ENCODE measurements at regions of chr14 and their contacts with region 1.

Region 1: GRCh38 chr14:66009089-66009488 is 477.1 kb upstream of the CCDC196 start:
- DNase-seq: peak; percentile 55
- ATAC-seq: peak; percentile 73; the same call in 1 of the 2 replicates
- H3K4me3 ChIP-seq: no peak overlapping the region
- H3K27ac ChIP-seq: no peak overlapping the region
- H3K4me1 ChIP-seq: no peaks in the 10 kb centered on the region
- H3K27me3 ChIP-seq: no peaks in the 10 kb centered on the region
- CTCF ChIP-seq: no peak

Region 2: GRCh38 chr14:65287264-65288131 is 721.6 kb before region 1 on chr14:
- CTCF ChIA-PET with region 1: no interaction called
- POLR2A ChIA-PET with region 1: no interaction called
- intact Hi-C with region 1: no loop called
- DNase-seq: no peak
- ATAC-seq: no peak
- H3K4me3 ChIP-seq: no peak overlapping the region
- H3K27ac ChIP-seq: no peak overlapping the region
- H3K4me1 ChIP-seq: peaks cover 28% of the 10 kb centered on the region
- H3K27me3 ChIP-seq: no peaks in the 10 kb centered on the region
- CTCF ChIP-seq: no peak

Region 3: DNA sequence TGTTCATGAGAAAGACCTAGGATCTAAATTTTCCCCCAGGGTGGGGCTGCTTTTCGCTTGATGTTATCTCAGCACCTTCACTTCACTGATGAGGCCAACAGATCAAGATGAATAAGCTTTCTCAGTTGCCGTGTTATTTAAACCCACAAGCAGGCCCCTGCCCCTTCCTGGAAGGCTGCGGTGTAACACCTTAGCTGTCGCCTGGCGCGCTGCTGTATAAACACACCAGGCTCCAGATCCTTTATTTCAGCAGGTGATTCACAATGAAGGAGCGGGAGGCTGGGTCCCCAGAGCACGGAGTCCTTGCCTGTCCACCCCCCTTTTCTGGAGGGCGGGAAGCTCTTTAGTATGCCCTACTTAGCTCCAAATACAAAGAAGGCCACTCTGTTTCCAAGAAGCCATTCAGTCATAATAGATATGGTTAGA is 81.1 kb before region 1 on chr14:
- CTCF ChIA-PET with region 1: no interaction called
- POLR2A ChIA-PET with region 1: no interaction called
- intact Hi-C with region 1: no loop called
- DNase-seq: no peak
- ATAC-seq: no peak
- H3K4me3 ChIP-seq: no peak overlapping the region
- H3K27ac ChIP-seq: no peak overlapping the region
- H3K4me1 ChIP-seq: no peaks in the 10 kb centered on the region
- H3K27me3 ChIP-seq: peaks cover 81% of the 10 kb centered on the region
- CTCF ChIP-seq: no peak

Region 4: GRCh38 chr14:65972891-65973290 is 36.2 kb before region 1 on chr14:
- CTCF ChIA-PET with region 1: no interaction called
- POLR2A ChIA-PET with region 1: no interaction called
- intact Hi-C with region 1: no loop called
- DNase-seq: no peak
- ATAC-seq: no peak
- H3K4me3 ChIP-seq: no peak overlapping the region
- H3K27ac ChIP-seq: no peak overlapping the region
- H3K4me1 ChIP-seq: no peaks in the 10 kb centered on the region
- H3K27me3 ChIP-seq: peaks cover 69% of the 10 kb centered on the region
- CTCF ChIP-seq: no peak

Region 5: GRCh38 chr14:66070509-66071319 is 61.6 kb after region 1 on chr14:
- CTCF ChIA-PET with region 1: no interaction called
- POLR2A ChIA-PET with region 1: interaction called, 16 read pairs
- intact Hi-C with region 1: no loop called
- DNase-seq: peak; percentile 74
- ATAC-seq: peak; percentile 76
- H3K4me3 ChIP-seq: no peak overlapping the region
- H3K27ac ChIP-seq: no peak overlapping the region
- H3K4me1 ChIP-seq: peaks cover 4% of the 10 kb centered on the region; the same call in 1 of the 2 replicates
- H3K27me3 ChIP-seq: peaks cover 67% of the 10 kb centered on the region
- CTCF ChIP-seq: peak; percentile 97